IMR-90 (cell line): ENCODE measurements at regions of chr4 and their contacts with region 1.

Region 1: GRCh38 chr4:78775303-78776030 is 683 bp upstream of the BMP2K start:
- DNase-seq: peak; percentile 80
- ATAC-seq: peak; percentile 79
- H3K4me3 ChIP-seq: peak overlapping the region; percentile 81
- H3K27ac ChIP-seq: peak overlapping the region; percentile 89
- H3K4me1 ChIP-seq: peaks cover 2% of the 10 kb centered on the region; the same call in 1 of the 2 replicates
- H3K27me3 ChIP-seq: no peaks in the 10 kb centered on the region
- CTCF ChIP-seq: no peak
- POLR2A ChIP-seq: no peak
- RAD21 ChIP-seq: 0 out of 2 replicates have a peak, but pooled peaks have one; percentile 5

Region 2: DNA sequence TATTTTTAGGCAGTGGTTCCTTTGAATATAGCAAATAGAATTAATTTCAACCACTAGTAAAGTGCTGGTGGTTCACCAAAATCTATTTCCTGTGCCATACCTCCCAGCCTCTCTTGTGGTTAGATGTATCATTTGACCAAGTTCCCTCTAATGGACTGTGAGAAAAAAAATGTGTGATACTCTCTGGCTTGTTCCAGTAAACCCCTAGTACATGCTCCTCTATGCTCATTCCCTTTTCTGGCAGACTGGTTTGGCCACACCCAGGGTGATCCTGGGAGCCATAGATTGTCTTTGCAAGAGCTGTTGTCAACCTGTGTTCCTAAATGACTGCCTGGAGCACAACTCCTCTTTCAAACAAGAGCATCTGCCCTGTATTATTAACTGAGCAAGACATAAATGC is 608.8 kb before region 1 on chr4:
- CTCF ChIA-PET with region 1: no interaction called
- POLR2A ChIA-PET with region 1: no interaction called
- dilution Hi-C with region 1: no loop called
- in situ Hi-C with region 1: no loop called
- intact Hi-C with region 1: no loop called
- DNase-seq: no peak
- ATAC-seq: no peak
- H3K4me3 ChIP-seq: no peak overlapping the region
- H3K27ac ChIP-seq: no peak overlapping the region
- H3K4me1 ChIP-seq: no peaks in the 10 kb centered on the region
- H3K27me3 ChIP-seq: no peaks in the 10 kb centered on the region
- CTCF ChIP-seq: no peak
- POLR2A ChIP-seq: no peak
- RAD21 ChIP-seq: no peak

Region 3: DNA sequence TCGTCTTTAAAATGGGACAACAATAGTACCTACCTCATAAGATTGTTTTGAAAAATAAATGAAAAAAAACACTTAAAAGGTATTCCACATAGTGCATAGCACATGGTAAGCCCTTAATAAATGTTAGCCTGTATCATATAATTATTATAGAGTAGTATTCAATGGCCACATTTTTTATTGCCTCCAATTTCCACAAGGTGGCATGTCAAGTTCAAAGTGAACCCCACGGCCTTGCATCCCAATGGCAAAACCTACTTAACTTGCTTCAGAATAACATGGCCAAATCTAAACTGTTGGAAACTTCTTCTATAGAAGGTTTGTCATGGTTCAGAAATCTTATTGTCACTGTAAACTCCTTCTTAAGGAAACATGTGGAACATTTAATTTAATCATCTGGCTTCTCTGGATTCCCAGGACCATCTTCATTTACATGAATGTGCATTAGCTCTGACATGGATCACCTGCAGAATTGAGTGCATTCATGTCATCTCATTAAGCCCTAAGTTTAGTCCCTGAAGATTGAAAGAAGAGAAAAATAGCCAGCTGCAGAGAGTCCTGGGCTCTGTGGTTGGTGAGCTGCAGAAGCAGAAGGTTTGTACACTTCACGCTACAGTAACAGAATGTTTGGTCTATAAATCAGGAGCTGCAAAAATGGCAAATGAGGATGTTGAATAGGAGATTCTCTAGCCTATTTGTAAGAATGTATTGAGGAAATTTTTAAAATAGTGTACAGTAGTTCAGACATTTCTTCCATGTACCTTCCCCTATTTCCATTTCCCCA is 162.9 kb before region 1 on chr4:
- CTCF ChIA-PET with region 1: no interaction called
- POLR2A ChIA-PET with region 1: no interaction called
- dilution Hi-C with region 1: no loop called
- in situ Hi-C with region 1: no loop called
- intact Hi-C with region 1: loop called (anchors 2 kb)
- DNase-seq: peak; percentile 61
- ATAC-seq: peak; percentile 73
- H3K4me3 ChIP-seq: no peak overlapping the region
- H3K27ac ChIP-seq: no peak overlapping the region
- H3K4me1 ChIP-seq: no peaks in the 10 kb centered on the region; the same call in 1 of the 2 replicates
- H3K27me3 ChIP-seq: no peaks in the 10 kb centered on the region
- CTCF ChIP-seq: peak; percentile 65
- POLR2A ChIP-seq: no peak
- RAD21 ChIP-seq: peak; percentile 76

Region 4: DNA sequence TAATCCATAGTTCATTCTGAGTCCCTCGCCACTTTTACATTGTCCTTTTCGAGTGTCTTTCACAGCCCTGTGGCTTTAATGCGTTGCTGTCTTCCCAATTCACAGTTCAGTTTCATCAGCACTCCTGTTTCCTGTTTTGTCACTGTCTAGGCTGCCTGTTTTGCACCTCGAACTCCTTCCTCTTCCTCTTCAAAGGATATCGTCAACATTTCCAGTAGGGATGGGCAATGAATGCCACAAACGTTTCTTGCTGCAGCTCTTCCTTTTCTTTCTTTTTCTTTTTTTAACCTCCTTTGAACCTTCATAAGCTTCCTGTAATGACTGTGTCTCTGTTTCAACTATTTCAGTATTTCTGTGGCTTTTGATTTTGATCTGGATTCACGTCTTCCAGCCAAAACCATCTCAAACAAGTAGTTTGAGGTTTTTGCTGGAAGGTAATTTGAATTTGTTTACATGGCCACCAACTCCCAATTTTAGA is 118.5 kb before region 1 on chr4:
- CTCF ChIA-PET with region 1: no interaction called
- POLR2A ChIA-PET with region 1: no interaction called
- dilution Hi-C with region 1: no loop called
- in situ Hi-C with region 1: loop called (anchors 10 kb)
- intact Hi-C with region 1: no loop called
- DNase-seq: no peak
- ATAC-seq: no peak
- H3K4me3 ChIP-seq: no peak overlapping the region
- H3K27ac ChIP-seq: no peak overlapping the region
- H3K4me1 ChIP-seq: peaks cover 10% of the 10 kb centered on the region
- H3K27me3 ChIP-seq: no peaks in the 10 kb centered on the region
- CTCF ChIP-seq: no peak
- POLR2A ChIP-seq: no peak
- RAD21 ChIP-seq: no peak

Region 5: DNA sequence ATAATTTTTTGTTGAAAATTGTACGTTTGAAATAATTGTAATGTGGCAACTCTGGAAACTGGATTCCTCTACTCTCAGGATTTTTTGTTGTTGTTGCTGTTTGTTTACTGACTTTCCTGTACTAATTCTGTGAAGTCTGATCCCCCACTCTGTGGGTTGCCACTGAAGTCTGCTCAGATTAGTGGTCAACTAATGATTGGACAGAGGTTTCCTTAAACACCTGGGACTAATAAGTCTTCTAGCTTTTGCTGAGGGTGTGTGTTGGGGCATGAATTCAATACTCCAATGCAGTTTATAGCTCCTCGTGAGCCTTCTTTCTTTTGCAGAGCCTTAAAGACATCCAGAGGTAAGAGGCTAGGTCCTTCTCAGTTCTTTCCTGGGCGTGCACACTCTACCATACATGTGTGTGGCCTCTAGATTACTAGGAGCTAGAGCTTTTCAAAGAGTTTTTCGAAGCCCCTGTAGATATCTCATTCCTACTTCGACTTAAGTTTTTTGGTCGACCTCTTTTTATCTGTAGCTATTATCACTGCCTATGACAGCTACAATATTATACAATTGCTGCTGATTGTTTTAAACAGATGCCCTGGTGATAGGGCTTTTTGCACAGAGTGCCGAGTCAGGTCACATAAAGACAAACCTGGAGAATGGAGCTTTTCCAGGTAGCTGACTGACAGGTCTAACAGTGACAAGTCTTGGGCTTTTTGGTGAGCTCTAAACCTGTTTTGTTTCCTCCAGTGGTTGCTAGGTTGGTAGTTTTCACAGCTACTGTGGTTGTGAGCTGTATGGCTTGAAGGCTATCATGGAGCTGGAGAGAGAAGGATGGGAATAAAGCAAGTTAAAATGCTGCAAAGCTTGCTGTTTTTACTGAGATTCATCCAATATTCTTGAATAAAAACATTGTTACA is 34.7 kb after region 1 on chr4:
- CTCF ChIA-PET with region 1: no interaction called
- POLR2A ChIA-PET with region 1: interaction called, 4 read pairs
- dilution Hi-C with region 1: no loop called
- in situ Hi-C with region 1: no loop called
- intact Hi-C with region 1: loop called (anchors 5 kb)
- DNase-seq: no peak
- ATAC-seq: no peak
- H3K4me3 ChIP-seq: no peak overlapping the region
- H3K27ac ChIP-seq: no peak overlapping the region
- H3K4me1 ChIP-seq: peaks cover 8% of the 10 kb centered on the region
- H3K27me3 ChIP-seq: no peaks in the 10 kb centered on the region
- CTCF ChIP-seq: no peak
- POLR2A ChIP-seq: no peak
- RAD21 ChIP-seq: no peak